Naive thymus-derived CD4-positive, alpha-beta T cell (primary cell): ENCODE measurements at regions of chr13 and their contacts with region 1.

Region 1: GRCh38 chr13:42969558-42970172 is 22.4 kb downstream of the EPSTI1 start:
- DNase-seq: peak; percentile 52 to 84 (median 74)
- ATAC-seq: peak; percentile 95
- H3K4me3 ChIP-seq: no peak overlapping the region
- H3K4me3 Mint-ChIP-seq: peak overlapping the region in 1 of 10 donors; percentile 32
- H3K27ac ChIP-seq: no peak overlapping the region
- H3K27ac Mint-ChIP-seq: peak overlapping the region in 3 of 9 donors; percentile 58 to 77 (median 63)
- H3K4me1 ChIP-seq: peaks cover 8 to 18% of the 10 kb centered on the region in 2 donors
- H3K4me1 Mint-ChIP-seq: peaks cover 13 to 38% (median 21%) of the 10 kb centered on the region in 7 donors
- H3K27me3 ChIP-seq: no peaks in the 10 kb centered on the region
- H3K27me3 Mint-ChIP-seq: no peaks in the 10 kb centered on the region

Region 2: DNA sequence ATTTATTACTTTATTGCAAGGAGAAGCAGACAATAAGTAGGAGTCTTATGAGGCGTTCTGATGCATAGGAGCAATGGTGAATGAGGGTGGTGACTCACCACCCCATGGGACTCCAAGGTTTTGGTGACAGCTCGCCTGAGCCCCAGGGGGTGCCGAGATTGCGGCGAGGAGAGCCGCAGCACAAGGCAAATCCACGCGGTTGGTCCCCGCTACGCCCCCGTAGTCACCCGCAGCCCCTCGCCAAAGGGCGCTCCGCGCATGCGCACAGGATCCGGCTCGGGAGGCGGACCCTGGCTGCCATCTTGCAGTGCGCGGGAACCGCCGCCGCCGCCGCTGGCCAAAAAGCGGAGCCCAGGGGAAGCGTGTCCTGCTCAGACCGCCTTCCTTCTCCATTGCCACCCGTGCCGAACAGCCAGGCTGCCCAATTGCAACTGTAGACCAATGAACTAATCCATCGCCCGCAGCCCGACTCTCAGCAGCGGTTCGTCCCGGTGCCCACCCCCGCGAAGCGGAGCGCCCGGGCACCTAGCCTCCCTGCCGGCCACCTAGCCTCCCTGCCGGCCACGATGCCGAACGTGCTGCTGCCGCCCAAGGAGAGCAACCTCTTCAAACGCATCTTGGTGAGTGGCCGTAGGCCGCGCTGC is 1658.6 kb before region 1 on chr13 and contains the start of gene NAA16:
- CTCF ChIA-PET with region 1: no interaction called
- POLR2A ChIA-PET with region 1: no interaction called
- intact Hi-C with region 1: no loop called
- DNase-seq: peak; percentile 91 to 99 (median 94)
- ATAC-seq: peak; percentile 91
- H3K4me3 ChIP-seq: peak within 1 kb of the TSS; percentile 97
- H3K4me3 Mint-ChIP-seq: peak within 1 kb of the TSS; percentile 80 to 99 (median 98)
- H3K27ac ChIP-seq: peak within 1 kb of the TSS; percentile 91
- H3K27ac Mint-ChIP-seq: peak within 1 kb of the TSS; percentile 76 to 96 (median 95)
- H3K4me1 ChIP-seq: peaks cover 25 to 29% of the 10 kb centered on the region in 2 donors
- H3K4me1 Mint-ChIP-seq: peaks cover 14 to 55% (median 41%) of the 10 kb centered on the region in 7 donors
- H3K27me3 ChIP-seq: no peaks in the 10 kb centered on the region
- H3K27me3 Mint-ChIP-seq: no peaks in the 10 kb centered on the region
- total RNA-seq, gene NAA16: 30.6 to 99.6 (median 90.4) TPM

Region 3: DNA sequence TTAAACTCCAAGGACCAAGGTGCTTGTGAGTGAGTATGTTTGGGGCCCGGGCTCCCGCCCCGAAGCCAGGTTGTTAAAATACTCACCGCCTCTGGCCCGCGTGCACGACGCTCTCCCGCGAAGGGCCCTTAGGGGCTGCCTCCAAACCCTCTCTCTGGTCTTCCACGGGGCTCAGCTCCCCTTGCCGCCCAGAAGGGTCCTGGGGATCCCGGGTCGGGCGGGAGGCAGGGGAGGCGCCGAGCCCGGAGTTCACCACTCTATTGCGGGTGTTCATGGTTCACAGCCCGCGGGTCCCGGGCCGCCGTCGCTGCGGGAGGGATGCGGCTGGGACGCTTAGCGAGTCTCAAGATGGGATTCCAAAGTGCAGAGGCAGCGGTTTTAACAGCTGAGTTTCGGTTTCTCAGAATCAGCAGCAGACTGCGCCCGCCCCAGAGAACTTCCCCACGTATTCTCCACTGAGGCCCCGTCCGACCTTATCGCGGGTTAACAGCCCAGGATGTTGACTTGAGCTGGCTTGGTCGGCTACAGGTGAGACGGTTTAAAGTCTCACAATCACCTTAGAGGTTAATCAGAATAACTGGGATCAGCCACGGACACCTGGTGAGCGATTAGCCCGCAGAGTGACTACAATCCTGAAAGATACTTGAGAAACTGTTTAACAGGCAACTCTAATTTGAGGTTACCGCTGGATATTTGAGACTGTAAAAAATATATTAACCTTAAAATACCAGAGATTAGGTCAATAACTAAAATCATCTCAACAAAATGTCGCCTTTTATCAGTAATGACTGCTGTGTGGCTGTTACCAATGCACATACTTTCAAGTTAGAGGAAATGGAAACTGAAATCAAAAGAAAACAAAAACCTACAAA is 22.5 kb after region 1 on chr13 and contains the start of gene EPSTI1:
- CTCF ChIA-PET with region 1: interaction called, 7 read pairs
- POLR2A ChIA-PET with region 1: interaction called, 6 read pairs
- intact Hi-C with region 1: loop called (anchors 1 kb)
- DNase-seq: peak; percentile 61 to 84 (median 77)
- ATAC-seq: peak; percentile 88
- H3K4me3 ChIP-seq: peak within 1 kb of the TSS; percentile 77
- H3K4me3 Mint-ChIP-seq: peak within 1 kb of the TSS; percentile 92 to 98 (median 96)
- H3K27ac ChIP-seq: peak within 1 kb of the TSS; percentile 94
- H3K27ac Mint-ChIP-seq: peak within 1 kb of the TSS; percentile 99 to 100 (median 100)
- H3K4me1 ChIP-seq: peaks cover 13 to 15% of the 10 kb centered on the region in 2 donors
- H3K4me1 Mint-ChIP-seq: peaks cover 27 to 73% (median 51%) of the 10 kb centered on the region in 7 donors
- H3K27me3 ChIP-seq: no peaks in the 10 kb centered on the region
- H3K27me3 Mint-ChIP-seq: no peaks in the 10 kb centered on the region
- total RNA-seq, gene EPSTI1: 8.4 to 125 (median 11.0) TPM

Region 4: DNA sequence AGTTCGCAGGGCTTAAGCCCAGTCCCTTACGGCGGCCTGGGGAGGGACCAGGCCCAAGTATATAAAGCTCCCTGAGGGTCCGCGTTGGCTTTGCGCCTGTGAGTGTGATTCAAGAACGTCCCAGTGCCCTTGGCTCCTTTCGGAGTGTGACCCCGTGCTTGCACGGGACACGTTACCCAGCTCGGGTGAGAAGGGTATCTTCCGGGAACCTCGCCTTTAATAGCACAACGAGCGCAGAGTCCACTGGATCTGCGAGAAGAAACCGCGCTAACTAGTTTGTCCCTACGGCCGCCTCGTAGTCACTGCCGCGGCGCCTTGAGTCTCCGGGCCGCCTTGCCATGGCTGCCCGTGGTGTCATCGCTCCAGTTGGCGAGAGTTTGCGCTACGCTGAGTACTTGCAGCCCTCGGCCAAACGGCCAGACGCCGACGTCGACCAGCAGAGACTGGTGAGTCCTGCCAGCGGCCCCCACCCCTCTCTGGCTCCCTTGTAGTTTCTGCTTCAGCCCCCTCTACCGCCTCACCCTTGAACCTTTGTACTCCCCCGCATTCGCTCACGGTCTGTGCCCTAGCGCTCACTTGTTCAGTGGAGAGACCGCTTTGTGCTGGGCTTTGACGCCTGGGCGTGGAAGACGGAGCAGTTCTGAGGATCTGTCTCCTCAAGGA is 53.8 kb after region 1 on chr13 and contains the start of gene DNAJC15:
- CTCF ChIA-PET with region 1: interaction called, 3 read pairs
- POLR2A ChIA-PET with region 1: no interaction called
- intact Hi-C with region 1: loop called (anchors 1 kb)
- DNase-seq: peak; percentile 72 to 88 (median 80)
- ATAC-seq: peak; percentile 93
- H3K4me3 ChIP-seq: peak within 1 kb of the TSS; percentile 87
- H3K4me3 Mint-ChIP-seq: peak within 1 kb of the TSS; percentile 92 to 100 (median 99)
- H3K27ac ChIP-seq: peak within 1 kb of the TSS; percentile 83
- H3K27ac Mint-ChIP-seq: peak within 1 kb of the TSS; percentile 92 to 99 (median 98)
- H3K4me1 ChIP-seq: peaks cover 9 to 20% of the 10 kb centered on the region in 2 donors
- H3K4me1 Mint-ChIP-seq: peaks cover 20 to 47% (median 38%) of the 10 kb centered on the region in 7 donors
- H3K27me3 ChIP-seq: no peaks in the 10 kb centered on the region
- H3K27me3 Mint-ChIP-seq: no peaks in the 10 kb centered on the region
- total RNA-seq, gene DNAJC15: 5.0 to 18.3 (median 10.5) TPM

Region 5: DNA sequence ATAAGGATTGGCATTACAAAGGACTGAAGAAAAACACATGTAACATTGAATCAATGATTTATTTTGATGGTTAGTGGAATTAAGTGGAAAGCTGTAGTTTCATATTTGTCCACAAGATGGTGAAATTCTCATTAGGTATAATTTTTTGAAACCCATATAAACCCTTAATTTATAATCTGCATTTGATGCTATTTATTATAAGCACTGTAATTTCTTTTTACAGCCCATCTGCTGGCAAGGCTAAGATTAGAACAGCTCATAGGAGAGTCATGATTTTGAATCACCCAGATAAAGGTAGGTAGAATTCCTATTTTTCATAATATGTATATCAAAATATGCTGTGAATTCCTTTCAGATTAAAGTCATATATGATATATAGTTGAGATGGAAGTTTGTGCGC is 115.9 kb after region 1 on chr13:
- CTCF ChIA-PET with region 1: interaction called, 5 read pairs
- POLR2A ChIA-PET with region 1: no interaction called
- intact Hi-C with region 1: loop called in 1 of 2 experiments (anchors 1 kb)
- DNase-seq: peak in 3 of 9 donors; percentile 5 to 21 (median 7)
- ATAC-seq: no peak
- H3K4me3 ChIP-seq: no peak overlapping the region
- H3K4me3 Mint-ChIP-seq: no peak overlapping the region
- H3K27ac ChIP-seq: no peak overlapping the region
- H3K27ac Mint-ChIP-seq: no peak overlapping the region
- H3K4me1 ChIP-seq: no peaks in the 10 kb centered on the region
- H3K4me1 Mint-ChIP-seq: peaks cover 0 to 18% (median 14%) of the 10 kb centered on the region in 7 donors
- H3K27me3 ChIP-seq: no peaks in the 10 kb centered on the region
- H3K27me3 Mint-ChIP-seq: no peaks in the 10 kb centered on the region

Region 6: GRCh38 chr13:43132257-43132656 is 162.6 kb after region 1 on chr13:
- CTCF ChIA-PET with region 1: interaction called, 8 read pairs
- POLR2A ChIA-PET with region 1: no interaction called
- intact Hi-C with region 1: loop called (anchors 1 kb)
- DNase-seq: no peak
- ATAC-seq: peak; percentile 22
- H3K4me3 ChIP-seq: no peak overlapping the region
- H3K4me3 Mint-ChIP-seq: no peak overlapping the region
- H3K27ac ChIP-seq: no peak overlapping the region
- H3K27ac Mint-ChIP-seq: no peak overlapping the region
- H3K4me1 ChIP-seq: peaks cover 0 to 8% of the 10 kb centered on the region in 2 donors
- H3K4me1 Mint-ChIP-seq: peaks cover 7 to 21% (median 13%) of the 10 kb centered on the region in 7 donors
- H3K27me3 ChIP-seq: no peaks in the 10 kb centered on the region
- H3K27me3 Mint-ChIP-seq: peaks cover 8 to 20% (median 11%) of the 10 kb centered on the region in 5 donors

Region 7: DNA sequence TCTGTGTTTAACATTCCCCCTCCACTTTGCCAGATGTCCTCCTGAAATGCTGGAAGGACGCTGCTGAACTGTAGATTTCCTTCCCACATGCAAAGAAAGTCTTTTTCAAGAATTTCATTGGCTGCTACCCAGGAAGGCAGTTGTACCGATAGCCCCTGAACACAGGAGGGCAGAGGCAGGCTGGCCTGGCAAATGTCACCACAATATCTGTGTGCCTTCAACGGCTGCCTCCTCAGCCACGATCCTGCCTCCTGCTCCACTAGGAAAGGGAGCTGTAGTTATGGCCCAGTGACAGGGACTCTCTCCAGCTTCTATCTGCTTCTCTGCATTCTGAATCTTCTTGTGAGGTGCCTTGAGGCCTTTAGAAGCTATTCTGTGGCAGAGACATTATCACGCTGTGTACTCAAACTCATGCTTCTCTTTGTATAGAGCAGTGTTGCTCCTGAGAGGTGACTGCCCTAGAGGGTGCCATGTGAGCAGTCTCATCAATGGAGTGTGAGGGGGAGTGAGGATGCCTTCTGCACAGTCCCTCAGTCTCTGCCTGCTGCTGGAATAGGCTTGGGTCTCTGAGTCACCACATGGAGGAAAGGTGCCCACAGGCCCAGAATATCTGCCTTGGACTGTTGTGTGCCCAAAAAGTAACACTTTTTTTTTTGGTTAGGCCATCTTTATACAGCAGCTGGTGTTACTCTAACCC is 333.5 kb after region 1 on chr13:
- CTCF ChIA-PET with region 1: no interaction called
- POLR2A ChIA-PET with region 1: no interaction called
- intact Hi-C with region 1: loop called in 1 of 2 experiments (anchors 10 kb)
- DNase-seq: peak in 1 of 9 donors; percentile 3
- ATAC-seq: no peak
- H3K4me3 ChIP-seq: no peak overlapping the region
- H3K4me3 Mint-ChIP-seq: no peak overlapping the region
- H3K27ac ChIP-seq: no peak overlapping the region
- H3K27ac Mint-ChIP-seq: no peak overlapping the region
- H3K4me1 ChIP-seq: no peaks in the 10 kb centered on the region
- H3K4me1 Mint-ChIP-seq: peaks cover 0 to 3% (median 0%) of the 10 kb centered on the region in 7 donors
- H3K27me3 ChIP-seq: no peaks in the 10 kb centered on the region
- H3K27me3 Mint-ChIP-seq: peaks cover 14 to 43% (median 19%) of the 10 kb centered on the region in 5 donors

Region 8: GRCh38 chr13:43878892-43879754 is 909.5 kb after region 1 on chr13 and contains the start of gene CCDC122:
- CTCF ChIA-PET with region 1: interaction called, 4 read pairs
- POLR2A ChIA-PET with region 1: no interaction called
- intact Hi-C with region 1: loop called (anchors 1 to 5 kb)
- DNase-seq: peak; percentile 44 to 81 (median 65)
- ATAC-seq: peak; percentile 91
- H3K4me3 ChIP-seq: peak within 1 kb of the TSS; percentile 60
- H3K4me3 Mint-ChIP-seq: peak within 1 kb of the TSS; percentile 82 to 93 (median 90)
- H3K27ac ChIP-seq: peak within 1 kb of the TSS; percentile 72
- H3K27ac Mint-ChIP-seq: peak within 1 kb of the TSS; percentile 53 to 90 (median 81)
- H3K4me1 ChIP-seq: peaks cover 0 to 9% of the 10 kb centered on the region in 2 donors
- H3K4me1 Mint-ChIP-seq: peaks cover 15 to 27% (median 23%) of the 10 kb centered on the region in 7 donors
- H3K27me3 ChIP-seq: no peaks in the 10 kb centered on the region
- H3K27me3 Mint-ChIP-seq: peaks cover 0 to 33% (median 3%) of the 10 kb centered on the region in 5 donors
- total RNA-seq, gene CCDC122: 1.1 to 2.3 (median 1.4) TPM